Astrocyte of the spinal cord (primary cell): ENCODE measurements at regions of chr9 and their contacts with region 1.

Region 1: DNA sequence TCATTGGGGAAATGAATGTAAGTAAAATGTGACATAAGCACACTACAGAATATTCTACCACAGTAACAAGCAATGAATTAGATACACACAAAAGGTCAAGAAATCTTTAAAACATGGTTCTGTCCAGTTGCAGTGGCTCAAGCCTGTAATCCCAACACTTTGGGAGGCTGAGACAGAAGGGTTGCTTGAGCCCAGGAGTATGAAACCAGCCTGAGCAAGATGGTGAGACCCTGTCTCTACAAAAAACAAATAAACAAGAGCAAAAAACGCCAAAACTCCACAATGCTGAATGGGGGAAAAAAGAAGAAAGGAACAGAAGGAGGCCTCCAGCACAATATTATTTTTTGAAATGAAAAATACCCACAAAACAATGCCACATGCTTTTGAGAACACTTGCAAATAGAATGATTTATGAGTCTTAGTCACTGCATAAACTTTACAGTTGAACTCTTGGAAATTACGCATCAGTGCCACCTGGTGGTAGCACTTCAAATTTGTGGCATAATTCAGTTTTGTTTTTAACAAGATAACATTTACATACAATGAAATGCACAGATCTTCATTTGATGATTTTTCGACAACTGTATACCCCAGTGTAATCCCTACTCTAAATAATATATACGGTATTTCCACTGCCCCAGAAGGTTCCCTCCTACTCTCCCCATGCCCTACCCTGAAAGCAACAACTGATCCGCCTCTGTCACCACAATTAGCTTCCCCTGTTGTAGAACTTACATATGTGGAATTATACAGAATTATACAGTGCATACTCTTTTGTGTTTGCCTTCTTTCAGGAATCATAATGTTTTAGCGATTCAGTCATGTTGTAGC is 14.4 kb upstream of the SPINK4 start:
- DNase-seq: peak; percentile 88
- H3K4me3 ChIP-seq: no peak overlapping the region
- CTCF ChIP-seq: peak; percentile 55

Region 2: GRCh38 chr9:33076358-33077004 is 149.1 kb before region 1 on chr9 and contains the start of gene SMU1:
- in situ Hi-C with region 1: loop called (anchors 25 kb)
- DNase-seq: peak; percentile 97
- H3K4me3 ChIP-seq: peak within 1 kb of the TSS; percentile 78
- CTCF ChIP-seq: no peak